PC-9 (cell line): ENCODE measurements at regions of chr2 and their contacts with region 1.

Region 1: DNA sequence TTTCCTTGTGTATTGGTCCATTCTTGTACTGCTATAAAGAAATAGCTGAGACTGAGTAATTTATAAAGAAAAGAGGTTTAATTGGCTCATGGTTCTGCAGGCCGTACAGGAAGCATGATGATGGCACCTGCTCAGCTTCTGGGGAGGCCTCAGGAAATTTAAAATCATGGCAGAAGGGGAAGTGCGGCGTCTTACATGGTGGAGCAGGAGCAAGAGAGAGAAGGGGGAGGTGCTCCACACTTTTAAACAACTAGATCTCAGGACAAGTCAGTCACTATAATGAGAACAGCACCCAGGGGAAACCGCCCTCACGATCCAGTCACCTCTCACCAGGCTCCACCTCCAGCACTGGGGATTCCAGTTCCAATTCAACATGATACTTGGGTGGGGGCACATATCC is 54.3 kb downstream of the MSH2 start:
- DNase-seq: no peak
- H3K4me3 ChIP-seq: no peak overlapping the region
- H3K27ac ChIP-seq: no peak overlapping the region
- H3K4me1 ChIP-seq: no peaks in the 10 kb centered on the region
- H3K27me3 ChIP-seq: no peaks in the 10 kb centered on the region
- CTCF ChIP-seq: no peak

Region 2: DNA sequence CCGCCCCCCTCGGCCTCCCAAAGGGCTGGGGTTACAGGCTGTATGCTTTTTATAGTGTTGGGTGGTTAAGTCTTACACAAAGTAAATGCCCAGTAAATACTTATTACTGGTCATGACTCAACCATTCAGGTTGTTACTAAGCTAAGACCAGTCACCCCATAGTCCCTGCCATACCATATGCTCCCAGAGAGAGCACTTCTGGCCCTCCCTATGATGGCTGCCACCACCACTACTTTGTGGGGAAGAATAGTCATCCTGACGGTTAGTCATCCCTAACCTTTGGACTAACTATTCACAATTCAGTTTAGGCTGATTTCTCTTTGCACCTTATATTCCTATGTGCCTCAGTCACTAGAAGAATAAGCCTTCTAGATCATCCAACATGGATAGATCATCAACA is 96.3 kb before region 1 on chr2:
- CTCF ChIA-PET with region 1: interaction called, 14 read pairs
- POLR2A ChIA-PET with region 1: no interaction called
- intact Hi-C with region 1: no loop called
- DNase-seq: peak in 1 of 2 experiments; percentile 83
- H3K4me3 ChIP-seq: no peak overlapping the region
- H3K27ac ChIP-seq: peak overlapping the region; percentile 66
- H3K4me1 ChIP-seq: peaks cover 23% of the 10 kb centered on the region
- H3K27me3 ChIP-seq: no peaks in the 10 kb centered on the region
- CTCF ChIP-seq: no peak

Region 3: GRCh38 chr2:47437287-47437686 is 20.0 kb before region 1 on chr2:
- CTCF ChIA-PET with region 1: no interaction called
- POLR2A ChIA-PET with region 1: no interaction called
- intact Hi-C with region 1: no loop called
- DNase-seq: no peak
- H3K4me3 ChIP-seq: no peak overlapping the region
- H3K27ac ChIP-seq: no peak overlapping the region
- H3K4me1 ChIP-seq: no peaks in the 10 kb centered on the region
- H3K27me3 ChIP-seq: no peaks in the 10 kb centered on the region
- CTCF ChIP-seq: peak; percentile 68

Region 4: GRCh38 chr2:47653902-47654789 is 196.9 kb after region 1 on chr2:
- CTCF ChIA-PET with region 1: no interaction called
- POLR2A ChIA-PET with region 1: no interaction called
- intact Hi-C with region 1: no loop called
- DNase-seq: peak; percentile 59 to 61
- H3K4me3 ChIP-seq: no peak overlapping the region
- H3K27ac ChIP-seq: 0 out of 2 replicates have a peak overlapping the region, but pooled peaks have one; percentile 5
- H3K4me1 ChIP-seq: peaks cover 41% of the 10 kb centered on the region
- H3K27me3 ChIP-seq: no peaks in the 10 kb centered on the region
- CTCF ChIP-seq: peak; percentile 57; the same call in 1 of the 2 replicates

Region 5: DNA sequence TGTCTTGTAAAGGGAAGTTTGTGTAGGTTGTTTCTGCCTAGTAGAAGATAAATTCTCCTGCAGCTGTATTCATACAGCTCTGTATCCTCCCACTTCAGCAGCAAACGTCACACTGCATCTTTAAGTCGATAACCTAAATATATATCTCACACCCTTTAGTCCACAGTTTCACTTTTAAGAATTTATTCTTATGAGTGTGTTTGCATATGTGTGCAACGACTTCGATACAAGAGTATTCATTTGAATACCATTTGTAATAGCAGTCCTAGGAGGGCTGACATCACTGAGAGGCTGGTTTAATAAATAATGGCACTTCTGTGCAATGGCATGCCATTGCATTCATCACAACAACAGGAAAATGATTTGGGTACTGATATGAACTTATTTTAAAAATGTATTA is 261.8 kb after region 1 on chr2:
- CTCF ChIA-PET with region 1: no interaction called
- POLR2A ChIA-PET with region 1: no interaction called
- intact Hi-C with region 1: no loop called
- DNase-seq: no peak
- H3K4me3 ChIP-seq: no peak overlapping the region
- H3K27ac ChIP-seq: no peak overlapping the region
- H3K4me1 ChIP-seq: no peaks in the 10 kb centered on the region
- H3K27me3 ChIP-seq: no peaks in the 10 kb centered on the region
- CTCF ChIP-seq: no peak

Region 6: DNA sequence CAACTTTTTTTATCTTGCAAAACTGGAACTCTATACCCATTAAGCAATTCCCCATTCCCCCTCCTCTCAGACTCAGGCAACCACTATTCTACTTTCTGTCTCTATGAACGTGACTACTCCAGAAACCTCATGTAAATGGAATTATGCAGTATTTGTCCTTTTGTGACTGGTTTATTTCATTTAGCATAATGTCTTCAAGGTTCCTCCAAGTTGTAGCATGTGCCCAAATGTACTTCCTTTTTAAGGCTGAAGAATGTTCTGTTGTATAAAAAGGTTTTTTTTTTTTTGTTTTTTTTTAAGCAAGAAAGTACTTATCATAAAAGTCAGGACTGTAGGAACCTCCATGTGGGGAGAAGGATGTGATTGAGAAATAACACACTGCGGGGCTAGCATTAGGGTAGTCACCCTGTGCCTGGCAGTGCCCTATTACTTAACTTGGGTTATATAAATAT is 711.9 kb after region 1 on chr2:
- CTCF ChIA-PET with region 1: no interaction called
- POLR2A ChIA-PET with region 1: interaction called, 13 read pairs
- intact Hi-C with region 1: no loop called
- DNase-seq: no peak
- H3K4me3 ChIP-seq: no peak overlapping the region
- H3K27ac ChIP-seq: no peak overlapping the region
- H3K4me1 ChIP-seq: no peaks in the 10 kb centered on the region
- H3K27me3 ChIP-seq: no peaks in the 10 kb centered on the region
- CTCF ChIP-seq: no peak